ENCODE measurements at regions of chr2 and their contacts with region 1.

Region 1: GRCh38 chr2:85327822-85328617 is at the start of gene TGOLN2:
- DNase-seq: peak; percentile 97
- ATAC-seq: peak; percentile 90
- H3K4me3 ChIP-seq: peak within 1 kb of the TSS; percentile 44 to 96 (median 86)
- H3K4me3 Mint-ChIP-seq: peak within 1 kb of the TSS; percentile 100
- H3K27ac ChIP-seq: peak within 1 kb of the TSS; percentile 83 to 99
- H3K27ac Mint-ChIP-seq: peak within 1 kb of the TSS; percentile 100
- H3K4me1 ChIP-seq: peaks cover 34 to 42% of the 10 kb centered on the region in 2 donors
- H3K4me1 Mint-ChIP-seq: peaks cover 59% of the 10 kb centered on the region
- H3K27me3 ChIP-seq: no peaks in the 10 kb centered on the region
- H3K27me3 Mint-ChIP-seq: no peaks in the 10 kb centered on the region
- CTCF ChIP-seq: no peak
- total RNA-seq, gene TGOLN2: 172 and 181 TPM in 2 replicates

Region 2: GRCh38 chr2:85354286-85355072 is 26.5 kb after region 1 on chr2 and contains the starts of genes ELMOD3 and RETSAT:
- CTCF ChIA-PET with region 1: interaction called, 3 read pairs
- POLR2A ChIA-PET with region 1: interaction called, 25 read pairs
- intact Hi-C with region 1: loop called (anchors 1 kb)
- DNase-seq: peak; percentile 98
- ATAC-seq: peak; percentile 99
- H3K4me3 ChIP-seq: peak within 1 kb of the TSS; percentile 60 to 100 (median 85)
- H3K4me3 Mint-ChIP-seq: peak within 1 kb of the TSS; percentile 95
- H3K27ac ChIP-seq: peak within 1 kb of the TSS; percentile 81 to 95
- H3K27ac Mint-ChIP-seq: peak within 1 kb of the TSS; percentile 95
- H3K4me1 ChIP-seq: peaks cover 19 to 26% of the 10 kb centered on the region in 2 donors
- H3K4me1 Mint-ChIP-seq: peaks cover 40% of the 10 kb centered on the region
- H3K27me3 ChIP-seq: no peaks in the 10 kb centered on the region
- H3K27me3 Mint-ChIP-seq: no peaks in the 10 kb centered on the region
- CTCF ChIP-seq: no peak
- total RNA-seq, gene ELMOD3: 34.0 and 34.3 TPM in 2 replicates
- total RNA-seq, gene RETSAT: 23.8 and 28.1 TPM in 2 replicates

Region 3: GRCh38 chr2:85409845-85410583 is 82.0 kb after region 1 on chr2 and contains the start of gene CAPG:
- CTCF ChIA-PET with region 1: no interaction called
- POLR2A ChIA-PET with region 1: interaction called, 10 read pairs
- intact Hi-C with region 1: loop called (anchors 5 kb)
- DNase-seq: peak; percentile 82
- ATAC-seq: peak; percentile 78
- H3K4me3 ChIP-seq: peak within 1 kb of the TSS; percentile 43 to 75 (median 57)
- H3K4me3 Mint-ChIP-seq: peak within 1 kb of the TSS; percentile 90
- H3K27ac ChIP-seq: peak within 1 kb of the TSS; percentile 71 to 84
- H3K27ac Mint-ChIP-seq: peak within 1 kb of the TSS; percentile 91
- H3K4me1 ChIP-seq: peaks cover 73 to 84% of the 10 kb centered on the region in 2 donors
- H3K4me1 Mint-ChIP-seq: peaks cover 76% of the 10 kb centered on the region
- H3K27me3 ChIP-seq: no peaks in the 10 kb centered on the region
- H3K27me3 Mint-ChIP-seq: no peaks in the 10 kb centered on the region
- CTCF ChIP-seq: no peak
- total RNA-seq, gene CAPG: 179 and 210 TPM in 2 replicates

Region 4: DNA sequence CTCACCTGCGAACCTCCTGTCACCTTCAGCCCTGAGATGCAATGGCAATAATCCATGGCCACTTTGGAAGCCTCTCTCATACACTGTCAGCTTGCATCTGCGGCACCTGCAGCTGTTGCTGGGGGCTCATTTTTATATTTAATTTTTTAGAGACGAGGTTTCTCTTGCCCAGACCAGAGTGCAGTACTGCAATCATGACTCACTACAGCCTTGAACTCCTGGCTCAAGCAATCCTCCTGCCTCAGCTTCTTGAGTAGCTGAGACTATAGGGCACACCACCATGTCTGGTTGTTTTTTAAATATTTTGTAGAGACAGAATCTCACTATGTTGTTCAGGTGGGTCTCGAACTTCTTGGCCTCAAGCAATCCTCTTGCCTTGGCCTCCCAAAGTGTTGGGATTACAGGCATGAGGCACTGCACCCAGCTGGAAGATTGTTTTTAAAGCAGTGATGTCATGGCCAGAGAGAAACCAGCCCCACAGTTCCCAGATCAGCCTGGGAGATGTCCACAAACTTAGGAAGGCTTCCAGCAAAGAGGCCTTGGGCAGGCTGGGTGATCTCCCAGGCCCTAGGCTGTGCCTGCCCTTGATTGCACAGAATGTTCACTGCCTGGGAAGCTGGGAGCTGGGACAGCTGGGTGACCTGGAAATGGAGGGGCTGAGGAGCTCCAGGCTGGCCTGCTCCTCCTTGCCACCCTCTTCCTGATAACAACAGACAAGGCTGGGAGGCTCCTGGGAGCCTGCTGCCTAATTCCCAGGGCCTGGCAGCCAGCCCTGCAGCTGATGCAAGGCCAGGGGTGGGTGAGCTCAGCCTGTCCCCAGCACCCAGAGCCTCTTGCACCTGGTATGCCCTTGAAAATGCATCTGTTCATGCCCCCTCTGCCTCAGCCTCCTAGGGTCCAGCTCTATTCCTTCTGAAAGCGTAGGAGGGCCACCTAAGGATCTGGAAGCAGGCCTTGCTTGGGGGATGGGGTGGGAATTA is 117.6 kb after region 1 on chr2:
- CTCF ChIA-PET with region 1: no interaction called
- POLR2A ChIA-PET with region 1: interaction called, 11 read pairs
- intact Hi-C with region 1: no loop called
- DNase-seq: no peak
- ATAC-seq: no peak
- H3K4me3 ChIP-seq: no peak overlapping the region
- H3K4me3 Mint-ChIP-seq: no peak overlapping the region
- H3K27ac ChIP-seq: no peak overlapping the region
- H3K27ac Mint-ChIP-seq: no peak overlapping the region
- H3K4me1 ChIP-seq: no peaks in the 10 kb centered on the region
- H3K4me1 Mint-ChIP-seq: no peaks in the 10 kb centered on the region
- H3K27me3 ChIP-seq: peaks cover 0 to 3% (median 0%) of the 10 kb centered on the region in 4 experiments
- H3K27me3 Mint-ChIP-seq: no peaks in the 10 kb centered on the region
- CTCF ChIP-seq: no peak

Region 5: GRCh38 chr2:85611705-85612587 is 283.9 kb after region 1 on chr2 and contains the start of gene C2orf68:
- CTCF ChIA-PET with region 1: no interaction called
- POLR2A ChIA-PET with region 1: interaction called, 5 read pairs
- intact Hi-C with region 1: loop called (anchors 1 kb)
- DNase-seq: peak; percentile 89
- ATAC-seq: peak; percentile 66
- H3K4me3 ChIP-seq: peak within 1 kb of the TSS; percentile 72 to 88 (median 76)
- H3K4me3 Mint-ChIP-seq: peak within 1 kb of the TSS; percentile 98
- H3K27ac ChIP-seq: peak within 1 kb of the TSS; percentile 34 to 83
- H3K27ac Mint-ChIP-seq: peak within 1 kb of the TSS; percentile 95
- H3K4me1 ChIP-seq: peaks cover 13 to 29% of the 10 kb centered on the region in 2 donors
- H3K4me1 Mint-ChIP-seq: peaks cover 33% of the 10 kb centered on the region
- H3K27me3 ChIP-seq: no peaks in the 10 kb centered on the region
- H3K27me3 Mint-ChIP-seq: no peaks in the 10 kb centered on the region
- CTCF ChIP-seq: no peak
- total RNA-seq, gene C2orf68: 82.4 and 90.1 TPM in 2 replicates

Measured in B cell (primary cell).